Caco-2 (cell line): ENCODE measurements at regions of chr7 and their contacts with region 1.

Region 1: DNA sequence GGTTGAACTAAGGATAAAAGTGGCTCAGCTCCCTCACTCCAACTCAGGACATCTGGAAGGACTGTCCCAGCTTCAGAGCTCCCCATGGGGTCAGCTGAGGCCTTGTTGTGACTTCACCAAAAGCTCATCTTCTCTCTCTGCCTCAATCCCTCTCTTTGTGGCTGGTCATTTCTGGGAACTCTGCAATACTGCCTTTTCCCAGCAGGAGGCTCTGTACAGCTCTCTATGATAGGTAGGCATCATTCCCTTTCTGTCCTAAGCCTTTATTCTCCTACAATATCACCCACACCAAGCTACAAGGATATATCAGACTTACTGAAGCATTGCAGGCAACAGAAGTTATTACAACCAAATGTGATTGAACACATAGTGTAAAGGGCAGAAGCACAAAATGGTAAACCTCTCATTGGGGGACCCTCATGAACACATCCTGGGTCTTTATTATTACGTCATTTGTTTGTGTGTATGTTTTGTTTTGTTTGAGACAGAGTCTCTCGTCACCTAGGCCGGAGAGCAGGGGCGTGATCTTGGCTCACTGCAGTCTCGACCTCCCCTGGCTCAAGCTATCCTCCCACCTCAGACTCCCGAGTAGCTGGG is 36.7 kb upstream of the PRPS1L1 start:
- DNase-seq: peak in 1 of 2 experiments; percentile 39
- H3K4me3 ChIP-seq: no peak overlapping the region
- H3K4me3 Mint-ChIP-seq: no peak overlapping the region
- H3K27ac Mint-ChIP-seq: no peak overlapping the region
- H3K4me1 ChIP-seq: no peaks in the 10 kb centered on the region
- H3K4me1 Mint-ChIP-seq: no peaks in the 10 kb centered on the region
- H3K27me3 ChIP-seq: no peaks in the 10 kb centered on the region
- H3K27me3 Mint-ChIP-seq: peaks cover 8% of the 10 kb centered on the region
- CTCF ChIP-seq: peak; percentile 45 to 46

Region 2: GRCh38 chr7:17903337-17903736 is 161.0 kb before region 1 on chr7:
- CTCF ChIA-PET with region 1: no interaction called
- POLR2A ChIA-PET with region 1: no interaction called
- intact Hi-C with region 1: loop called (anchors 5 kb)
- DNase-seq: no peak
- H3K4me3 ChIP-seq: no peak overlapping the region
- H3K4me3 Mint-ChIP-seq: no peak overlapping the region
- H3K27ac Mint-ChIP-seq: no peak overlapping the region
- H3K4me1 ChIP-seq: no peaks in the 10 kb centered on the region; the same call in 1 of the 2 replicates
- H3K4me1 Mint-ChIP-seq: no peaks in the 10 kb centered on the region
- H3K27me3 ChIP-seq: no peaks in the 10 kb centered on the region
- H3K27me3 Mint-ChIP-seq: no peaks in the 10 kb centered on the region
- CTCF ChIP-seq: no peak

Region 3: GRCh38 chr7:18165166-18165780 is 100.9 kb after region 1 on chr7:
- CTCF ChIA-PET with region 1: no interaction called
- POLR2A ChIA-PET with region 1: no interaction called
- intact Hi-C with region 1: no loop called
- DNase-seq: no peak
- H3K4me3 ChIP-seq: no peak overlapping the region
- H3K4me3 Mint-ChIP-seq: no peak overlapping the region
- H3K27ac Mint-ChIP-seq: no peak overlapping the region
- H3K4me1 ChIP-seq: no peaks in the 10 kb centered on the region
- H3K4me1 Mint-ChIP-seq: no peaks in the 10 kb centered on the region
- H3K27me3 ChIP-seq: no peaks in the 10 kb centered on the region
- H3K27me3 Mint-ChIP-seq: peaks cover 6% of the 10 kb centered on the region
- CTCF ChIP-seq: no peak

Region 4: DNA sequence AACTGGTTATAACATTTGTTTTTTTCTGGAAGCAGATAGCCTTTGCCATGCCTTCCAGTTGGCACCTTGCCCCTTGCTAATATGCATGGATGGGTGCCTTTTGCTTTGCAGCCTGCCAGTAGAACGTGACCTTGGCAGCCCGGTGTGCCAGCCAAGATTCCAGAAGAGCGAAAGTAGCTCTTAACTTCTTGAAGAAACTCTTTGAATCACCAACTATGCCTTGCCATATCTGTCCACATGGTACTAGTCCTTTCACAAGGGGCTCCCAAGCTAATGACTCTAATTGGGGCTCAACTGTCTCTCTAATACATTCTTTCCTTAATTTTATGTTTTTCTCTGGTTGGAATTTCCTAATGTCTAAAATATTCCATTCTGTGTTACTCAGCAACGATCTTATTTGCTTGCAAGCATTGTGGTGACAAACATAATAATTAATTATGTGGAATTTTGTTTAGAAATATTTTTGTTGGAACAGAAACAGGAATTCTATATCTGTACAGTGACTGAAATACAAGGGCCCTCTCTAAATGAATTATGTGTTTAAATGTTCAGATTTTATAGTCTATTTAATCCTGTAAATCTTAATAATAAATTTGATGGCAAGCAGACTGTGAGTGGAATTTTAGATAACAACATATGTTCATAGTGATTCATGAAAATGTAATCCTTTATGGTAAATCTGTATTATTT is 477.0 kb after region 1 on chr7:
- CTCF ChIA-PET with region 1: no interaction called
- POLR2A ChIA-PET with region 1: no interaction called
- intact Hi-C with region 1: no loop called
- DNase-seq: no peak
- H3K4me3 ChIP-seq: no peak overlapping the region
- H3K4me3 Mint-ChIP-seq: no peak overlapping the region
- H3K27ac Mint-ChIP-seq: no peak overlapping the region
- H3K4me1 ChIP-seq: no peaks in the 10 kb centered on the region
- H3K4me1 Mint-ChIP-seq: no peaks in the 10 kb centered on the region
- H3K27me3 ChIP-seq: no peaks in the 10 kb centered on the region
- H3K27me3 Mint-ChIP-seq: no peaks in the 10 kb centered on the region
- CTCF ChIP-seq: no peak